Sigmoid colon (tissue), 7 donors: ENCODE measurements at regions of chr11 and their contacts with region 1.

Region 1: GRCh38 chr11:133956650-133957633 is at the start of gene IGSF9B:
- DNase-seq: peak; percentile 94
- H3K4me3 ChIP-seq: peak within 1 kb of the TSS; percentile 55 to 80 (median 74)
- H3K27ac ChIP-seq: peak within 1 kb of the TSS; percentile 93 to 98 (median 95)
- H3K4me1 ChIP-seq: peaks cover 0 to 56% (median 44%) of the 10 kb centered on the region in 4 donors
- H3K27me3 ChIP-seq: no peaks in the 10 kb centered on the region
- CTCF ChIP-seq: no peak
- EP300 ChIP-seq: no peak
- POLR2A ChIP-seq: no peak
- total RNA-seq, gene IGSF9B: 12.5 to 53.7 (median 19.0) TPM

Region 2: GRCh38 chr11:133966921-133967598 is 10.1 kb after region 1 on chr11:
- intact Hi-C with region 1: no loop called
- DNase-seq: peak; percentile 73
- H3K4me3 ChIP-seq: peak overlapping the region in 2 of 4 donors; percentile 9 to 20
- H3K27ac ChIP-seq: peak overlapping the region; percentile 36 to 78 (median 67)
- H3K4me1 ChIP-seq: peaks cover 0 to 35% (median 31%) of the 10 kb centered on the region in 4 donors
- H3K27me3 ChIP-seq: no peaks in the 10 kb centered on the region
- CTCF ChIP-seq: peak; percentile 17 to 58 (median 35)
- EP300 ChIP-seq: no peak
- POLR2A ChIP-seq: no peak

Region 3: DNA sequence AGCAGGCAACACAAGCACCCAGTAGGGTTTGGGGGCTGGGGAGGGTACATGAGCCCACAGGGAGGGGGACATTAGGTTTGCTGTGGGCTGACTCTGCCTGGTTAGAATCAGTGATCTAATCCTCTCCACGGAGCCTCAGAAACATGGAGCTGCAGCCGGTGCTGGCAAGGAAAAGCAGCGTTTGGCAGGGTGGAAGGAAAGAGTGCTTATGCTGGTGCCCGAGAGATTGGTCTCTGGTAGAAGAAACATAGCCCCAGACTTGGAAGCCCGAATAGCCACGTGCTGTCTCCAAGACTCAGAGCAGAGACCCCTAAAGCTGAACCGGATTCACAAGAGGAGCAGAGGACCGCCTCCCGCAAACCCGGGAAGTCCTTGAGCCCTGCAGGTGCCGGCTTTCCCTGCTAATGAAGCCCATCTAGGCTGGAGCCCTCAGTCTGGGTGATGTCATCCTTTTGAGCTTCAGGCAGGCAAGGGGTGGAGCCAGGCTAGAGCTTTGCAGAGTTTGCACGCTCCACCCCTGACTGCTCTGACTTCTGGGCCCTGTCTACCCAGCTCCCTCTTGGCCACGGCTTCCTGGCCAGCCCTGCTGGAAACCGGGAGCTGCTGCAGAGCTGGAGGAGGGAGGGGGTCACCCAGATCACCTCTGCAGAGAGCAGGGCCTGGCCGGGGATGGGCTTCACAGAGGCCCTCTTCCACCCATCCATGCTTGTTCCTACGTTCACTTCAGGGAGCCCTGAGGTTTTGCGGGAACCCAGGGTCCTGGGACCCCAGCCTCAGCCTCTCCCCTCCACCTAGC is 77.0 kb after region 1 on chr11:
- intact Hi-C with region 1: loop called (anchors 2 kb)
- DNase-seq: peak; percentile 95
- H3K4me3 ChIP-seq: peak overlapping the region; percentile 3 to 40 (median 24)
- H3K27ac ChIP-seq: peak overlapping the region; percentile 92 to 98 (median 93)
- H3K4me1 ChIP-seq: peaks cover 0 to 71% (median 63%) of the 10 kb centered on the region in 4 donors
- H3K27me3 ChIP-seq: no peaks in the 10 kb centered on the region
- CTCF ChIP-seq: peak in 2 of 4 experiments; percentile 14 to 21
- EP300 ChIP-seq: peak in 1 of 4 donors; percentile 23
- POLR2A ChIP-seq: peak in 1 of 2 donors; percentile 39

Region 4: GRCh38 chr11:134040386-134041302 is 83.7 kb after region 1 on chr11:
- intact Hi-C with region 1: loop called (anchors 2 kb)
- DNase-seq: peak; percentile 86
- H3K4me3 ChIP-seq: no peak overlapping the region
- H3K27ac ChIP-seq: peak overlapping the region; percentile 92 to 98 (median 93)
- H3K4me1 ChIP-seq: peaks cover 2 to 82% (median 75%) of the 10 kb centered on the region in 4 donors
- H3K27me3 ChIP-seq: no peaks in the 10 kb centered on the region
- CTCF ChIP-seq: no peak
- EP300 ChIP-seq: peak in 1 of 4 donors; percentile 61
- POLR2A ChIP-seq: no peak